Natural killer cell (primary cell): ENCODE measurements at regions of chr16 and their contacts with region 1.

Region 1: GRCh38 chr16:27461483-27462171 is 59.7 kb downstream of the IL21R start:
- DNase-seq: no peak
- ATAC-seq: no peak
- H3K4me3 ChIP-seq: no peak overlapping the region
- H3K4me3 Mint-ChIP-seq: peak overlapping the region; percentile 28
- H3K27ac ChIP-seq: no peak overlapping the region
- H3K27ac Mint-ChIP-seq: peak overlapping the region; percentile 72 to 96
- H3K4me1 ChIP-seq: peaks cover 76% of the 10 kb centered on the region
- H3K4me1 Mint-ChIP-seq: peaks cover 47 to 76% of the 10 kb centered on the region in 2 donors
- H3K27me3 ChIP-seq: no peaks in the 10 kb centered on the region
- H3K27me3 Mint-ChIP-seq: no peaks in the 10 kb centered on the region
- CTCF ChIP-seq: no peak

Region 2: DNA sequence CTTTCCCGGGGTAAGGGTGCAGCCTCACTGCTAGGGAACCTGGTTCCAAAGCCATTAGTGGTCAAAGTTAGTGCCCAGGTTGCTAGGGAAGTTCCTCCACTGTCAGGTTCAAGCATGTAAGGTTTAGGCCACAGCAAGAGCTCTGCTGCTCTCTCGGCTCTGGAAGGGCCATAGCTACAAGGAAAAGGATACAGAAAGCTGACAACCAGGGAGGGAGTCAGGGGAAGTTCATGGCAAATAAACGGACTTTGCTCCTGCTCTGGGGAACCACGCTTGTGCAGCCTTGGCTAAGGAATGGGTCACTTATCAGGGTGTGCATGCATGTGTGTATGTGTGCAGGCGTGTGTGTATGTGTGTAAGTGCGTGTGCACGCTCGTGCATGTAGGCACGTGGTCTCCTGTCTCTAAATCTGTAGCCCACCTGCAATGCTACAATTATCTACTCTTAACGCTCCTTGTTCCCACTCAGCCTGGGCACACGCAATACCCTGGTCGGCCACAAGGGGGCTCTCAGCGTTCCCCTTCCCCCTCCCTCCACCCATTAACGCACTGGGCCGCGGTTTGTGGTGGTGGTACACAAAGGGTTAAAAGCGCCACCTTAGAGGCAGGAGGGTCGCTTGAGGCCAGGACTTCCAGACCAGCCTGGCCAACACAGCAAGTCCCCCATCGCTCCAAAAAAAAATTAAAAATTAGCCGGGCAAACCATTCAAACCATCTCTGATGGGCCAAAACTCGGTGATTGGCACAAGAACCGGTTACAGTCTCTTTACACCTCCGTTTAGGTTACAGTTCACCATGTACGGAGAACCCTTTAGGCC is 306.7 kb before region 1 on chr16:
- intact Hi-C with region 1: loop called (anchors 1 kb)
- DNase-seq: peak; percentile 61 to 83
- ATAC-seq: peak; percentile 77 to 96 (median 86)
- H3K4me3 ChIP-seq: no peak overlapping the region
- H3K4me3 Mint-ChIP-seq: no peak overlapping the region
- H3K27ac ChIP-seq: no peak overlapping the region
- H3K27ac Mint-ChIP-seq: no peak overlapping the region
- H3K4me1 ChIP-seq: peaks cover 7% of the 10 kb centered on the region
- H3K4me1 Mint-ChIP-seq: peaks cover 8 to 10% of the 10 kb centered on the region in 2 donors
- H3K27me3 ChIP-seq: no peaks in the 10 kb centered on the region
- H3K27me3 Mint-ChIP-seq: no peaks in the 10 kb centered on the region
- CTCF ChIP-seq: peak; percentile 97

Region 3: GRCh38 chr16:27179500-27180072 is 282.0 kb before region 1 on chr16:
- intact Hi-C with region 1: loop called (anchors 1 kb)
- DNase-seq: peak; percentile 80 to 92
- ATAC-seq: peak; percentile 98 to 100 (median 100)
- H3K4me3 ChIP-seq: no peak overlapping the region
- H3K4me3 Mint-ChIP-seq: peak overlapping the region; percentile 0
- H3K27ac ChIP-seq: no peak overlapping the region
- H3K27ac Mint-ChIP-seq: peak overlapping the region in 1 of 2 donors; percentile 71
- H3K4me1 ChIP-seq: peaks cover 13% of the 10 kb centered on the region
- H3K4me1 Mint-ChIP-seq: peaks cover 11 to 16% of the 10 kb centered on the region in 2 donors
- H3K27me3 ChIP-seq: no peaks in the 10 kb centered on the region
- H3K27me3 Mint-ChIP-seq: no peaks in the 10 kb centered on the region
- CTCF ChIP-seq: peak; percentile 87

Region 4: GRCh38 chr16:28950648-28951409 is 1489.2 kb after region 1 on chr16 and contains the start of gene NFATC2IP:
- intact Hi-C with region 1: no loop called
- DNase-seq: peak; percentile 99 to 100
- ATAC-seq: peak; percentile 92 to 98 (median 93)
- H3K4me3 ChIP-seq: peak within 1 kb of the TSS; percentile 79
- H3K4me3 Mint-ChIP-seq: peak within 1 kb of the TSS; percentile 89
- H3K27ac ChIP-seq: peak within 1 kb of the TSS; percentile 67
- H3K27ac Mint-ChIP-seq: peak within 1 kb of the TSS; percentile 82 to 96
- H3K4me1 ChIP-seq: peaks cover 29% of the 10 kb centered on the region
- H3K4me1 Mint-ChIP-seq: peaks cover 20 to 25% of the 10 kb centered on the region in 2 donors
- H3K27me3 ChIP-seq: no peaks in the 10 kb centered on the region
- H3K27me3 Mint-ChIP-seq: no peaks in the 10 kb centered on the region
- CTCF ChIP-seq: no peak
- total RNA-seq, gene NFATC2IP: 87.1 to 132 (median 108) TPM